Heart left ventricle (tissue), 16 donors: ENCODE measurements at regions of chr19 and their contacts with region 1.

Region 1: DNA sequence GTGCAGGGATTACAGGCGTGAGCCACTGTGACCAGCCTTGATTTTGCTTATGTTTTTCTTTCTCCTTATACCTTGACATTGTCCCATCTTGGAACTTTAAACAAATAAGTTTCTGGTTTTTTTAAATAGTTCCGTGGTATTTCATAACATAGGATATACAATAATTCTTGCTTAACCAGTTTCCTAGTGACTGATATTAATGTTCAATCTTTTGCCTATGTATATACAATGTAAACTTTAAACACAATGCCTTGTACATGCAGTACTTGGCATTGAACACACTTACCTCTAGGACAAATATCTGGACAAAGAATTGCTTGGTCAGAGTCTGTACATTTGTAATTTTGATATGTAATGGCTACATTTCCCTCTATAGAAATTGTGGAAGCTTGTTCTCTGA is 24.4 kb upstream of the SPACA4 start:
- DNase-seq: no peak
- ATAC-seq: no peak
- H3K4me3 ChIP-seq: no peak overlapping the region
- H3K27ac ChIP-seq: no peak overlapping the region
- H3K4me1 ChIP-seq: peaks cover 0 to 14% (median 5%) of the 10 kb centered on the region in 12 donors
- H3K27me3 ChIP-seq: no peaks in the 10 kb centered on the region
- CTCF ChIP-seq: no peak
- POLR2A ChIP-seq: no peak

Region 2: GRCh38 chr19:48492925-48493717 is 89.0 kb before region 1 on chr19:
- intact Hi-C with region 1: loop called (anchors 1 to 5 kb)
- DNase-seq: peak; percentile 95 to 97 (median 97)
- ATAC-seq: peak; percentile 89 to 92 (median 90)
- H3K4me3 ChIP-seq: peak overlapping the region; percentile 23 to 78 (median 61)
- H3K27ac ChIP-seq: peak overlapping the region in 11 of 12 donors; percentile 29 to 77 (median 66)
- H3K4me1 ChIP-seq: peaks cover 0 to 39% (median 10%) of the 10 kb centered on the region in 12 donors
- H3K27me3 ChIP-seq: peaks cover 0 to 32% (median 1%) of the 10 kb centered on the region in 9 donors
- CTCF ChIP-seq: no peak
- POLR2A ChIP-seq: peak in 1 of 2 donors; percentile 63

Region 3: GRCh38 chr19:48506138-48506733 is 75.9 kb before region 1 on chr19:
- intact Hi-C with region 1: loop called in 8 of 10 experiments (anchors 5 kb)
- DNase-seq: no peak
- ATAC-seq: peak in 1 of 4 donors; percentile 17
- H3K4me3 ChIP-seq: no peak overlapping the region
- H3K27ac ChIP-seq: no peak overlapping the region
- H3K4me1 ChIP-seq: peaks cover 0 to 14% (median 3%) of the 10 kb centered on the region in 12 donors
- H3K27me3 ChIP-seq: peaks cover 4 to 34% (median 15%) of the 10 kb centered on the region in 9 donors
- CTCF ChIP-seq: peak; percentile 9 to 47 (median 33)
- POLR2A ChIP-seq: no peak

Region 4: GRCh38 chr19:48513289-48514122 is 68.7 kb before region 1 on chr19:
- intact Hi-C with region 1: loop called in 8 of 10 experiments (anchors 5 kb)
- DNase-seq: peak in 4 of 5 donors; percentile 54 to 73 (median 68)
- ATAC-seq: peak; percentile 55 to 85 (median 82)
- H3K4me3 ChIP-seq: peak overlapping the region; percentile 37 to 80 (median 62)
- H3K27ac ChIP-seq: peak overlapping the region in 5 of 12 donors; percentile 30 to 55 (median 46)
- H3K4me1 ChIP-seq: peaks cover 0 to 26% (median 3%) of the 10 kb centered on the region in 12 donors
- H3K27me3 ChIP-seq: peaks cover 0 to 42% (median 29%) of the 10 kb centered on the region in 9 donors
- CTCF ChIP-seq: no peak
- POLR2A ChIP-seq: no peak